Activated naive CD4-positive, alpha-beta T cell treated with anti-CD3 and anti-CD28 coated beads, Interleukin-2, amount 10 ng/mL, durations not matched to agents 7 days and 5 days (primary cell): ENCODE measurements at regions of chrX and their contacts with region 1.

Region 1: DNA sequence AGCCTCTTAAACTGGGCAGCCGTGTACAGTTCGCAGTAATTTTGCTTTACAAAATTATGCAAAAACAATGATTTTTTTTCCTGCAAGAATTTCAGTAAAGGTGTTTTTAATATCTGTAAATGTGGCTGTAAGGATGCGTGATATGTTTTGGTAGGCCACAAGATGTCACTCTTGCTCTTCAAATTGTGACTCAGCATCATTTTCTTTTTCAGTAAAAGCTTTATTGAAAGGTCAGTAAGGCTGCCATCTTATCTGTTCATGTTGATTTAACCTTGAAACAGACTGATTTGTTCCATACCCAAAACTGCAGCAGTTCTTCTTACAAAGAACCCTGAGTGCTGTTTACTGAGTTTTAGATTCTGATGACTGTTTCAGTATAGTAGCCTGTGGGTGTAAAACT is 39.9 kb downstream of the TXLNG start:
- DNase-seq: no peak
- H3K4me3 Mint-ChIP-seq: no peak overlapping the region
- H3K27ac Mint-ChIP-seq: peak overlapping the region; percentile 28
- H3K4me1 Mint-ChIP-seq: peaks cover 5% of the 10 kb centered on the region
- H3K27me3 Mint-ChIP-seq: no peaks in the 10 kb centered on the region

Region 2: GRCh38 chrX:17007206-17007683 is 181.0 kb after region 1 on chrX:
- CTCF ChIA-PET with region 1: no interaction called
- DNase-seq: no peak
- H3K4me3 Mint-ChIP-seq: no peak overlapping the region
- H3K27ac Mint-ChIP-seq: no peak overlapping the region
- H3K4me1 Mint-ChIP-seq: peaks cover 8% of the 10 kb centered on the region
- H3K27me3 Mint-ChIP-seq: peaks cover 5% of the 10 kb centered on the region

Region 3: GRCh38 chrX:17046478-17047097 is 220.4 kb after region 1 on chrX:
- CTCF ChIA-PET with region 1: interaction called, 20 read pairs
- DNase-seq: peak; percentile 55
- H3K4me3 Mint-ChIP-seq: no peak overlapping the region
- H3K27ac Mint-ChIP-seq: no peak overlapping the region
- H3K4me1 Mint-ChIP-seq: no peaks in the 10 kb centered on the region
- H3K27me3 Mint-ChIP-seq: no peaks in the 10 kb centered on the region